ENCODE measurements at regions of chr10 and their contacts with region 1.

Region 1: GRCh38 chr10:131437556-131438475 is 126.3 kb upstream of the TCERG1L start:
- DNase-seq: peak in 7 of 10 donors; percentile 21 to 68 (median 54)
- H3K4me3 ChIP-seq: peak overlapping the region in 1 of 59 donors; percentile 4
- H3K27ac ChIP-seq: peak overlapping the region in 37 of 59 donors; percentile 5 to 71 (median 47)
- H3K27me3 ChIP-seq: peaks cover 0 to 18% (median 0%) of the 10 kb centered on the region in 45 donors
- CTCF ChIP-seq: no peak

Region 2: DNA sequence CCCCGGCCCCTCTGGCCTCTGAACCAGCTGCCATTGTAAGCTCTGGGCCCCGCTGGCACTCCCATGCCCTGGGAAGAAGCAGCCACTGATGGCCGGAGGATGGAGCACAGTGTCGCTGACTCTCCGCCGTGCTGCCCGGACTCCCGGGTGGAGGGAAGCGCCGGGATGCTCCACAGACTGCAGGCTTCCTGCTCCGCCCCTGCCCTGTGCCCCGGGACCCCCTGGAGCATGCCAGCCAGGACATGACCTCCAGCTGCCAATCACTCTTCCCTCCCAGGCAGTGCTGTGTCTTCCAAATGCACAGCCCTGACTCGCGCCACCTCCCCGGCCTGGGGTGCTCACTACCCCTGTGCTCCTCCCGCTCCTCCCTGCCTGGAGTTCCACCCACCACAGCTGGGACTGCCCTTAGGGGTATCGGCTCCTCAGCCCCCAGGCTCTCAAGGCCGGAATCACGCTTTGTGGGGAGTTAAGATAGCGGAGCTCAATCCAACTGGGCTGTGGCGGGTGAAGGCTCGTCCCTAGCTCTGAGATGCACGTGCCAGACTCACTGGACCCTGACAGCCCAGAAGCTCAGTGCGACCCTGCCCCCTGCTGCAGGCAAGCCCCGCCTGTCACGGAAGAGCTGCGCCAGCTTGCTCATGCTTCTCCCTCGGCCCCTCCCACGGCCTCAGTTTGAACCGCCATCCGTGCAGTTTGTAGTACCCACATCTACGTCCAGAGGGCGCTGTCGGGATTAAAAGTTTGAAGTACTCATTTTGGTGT is 16.0 kb after region 1 on chr10:
- intact Hi-C with region 1: loop called in 1 of 2 experiments (anchors 2 kb)
- DNase-seq: peak; percentile 72 to 93 (median 82)
- H3K4me3 ChIP-seq: peak overlapping the region; percentile 13 to 66 (median 49)
- H3K27ac ChIP-seq: peak overlapping the region in 42 of 59 donors; percentile 4 to 84 (median 66)
- H3K27me3 ChIP-seq: peaks cover 0 to 12% (median 0%) of the 10 kb centered on the region in 45 donors
- CTCF ChIP-seq: peak; percentile 79 to 96 (median 90)